HepG2 (cell line): ENCODE measurements at regions of chr4 and their contacts with region 1.

Region 1: DNA sequence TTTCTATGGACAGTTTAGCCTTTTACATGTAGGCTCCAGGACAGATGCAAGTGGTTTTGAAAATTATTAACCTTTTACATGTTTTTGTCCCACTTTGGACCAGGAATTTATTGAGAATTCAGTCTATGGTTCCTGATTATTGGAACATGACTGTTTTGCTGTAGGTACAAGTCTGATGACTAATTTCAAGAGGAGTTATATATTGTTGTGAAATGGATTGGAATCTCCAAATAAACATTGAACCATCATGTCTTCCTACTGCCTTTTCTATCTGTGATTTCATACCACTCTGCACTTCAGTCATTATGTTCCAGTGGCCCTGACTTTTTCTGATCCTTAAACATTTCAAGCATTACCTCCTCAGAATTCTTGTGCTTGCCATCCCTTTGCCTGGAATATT is 35.9 kb downstream of the TBC1D19 start:
- DNase-seq: no peak
- ATAC-seq: no peak
- H3K4me3 ChIP-seq: no peak overlapping the region
- H3K27ac ChIP-seq: no peak overlapping the region
- H3K4me1 ChIP-seq: no peaks in the 10 kb centered on the region
- H3K27me3 ChIP-seq: no peaks in the 10 kb centered on the region
- CTCF ChIP-seq: no peak
- EP300 ChIP-seq: no peak
- POLR2A ChIP-seq: no peak
- RAD21 ChIP-seq: no peak

Region 2: GRCh38 chr4:26330186-26330787 is 289.5 kb before region 1 on chr4:
- CTCF ChIA-PET with region 1: no interaction called
- POLR2A ChIA-PET with region 1: no interaction called
- in situ Hi-C with region 1: no loop called
- intact Hi-C with region 1: no loop called
- DNase-seq: peak; percentile 64
- ATAC-seq: peak; percentile 91
- H3K4me3 ChIP-seq: no peak overlapping the region
- H3K27ac ChIP-seq: no peak overlapping the region
- H3K4me1 ChIP-seq: peaks cover 22% of the 10 kb centered on the region
- H3K27me3 ChIP-seq: no peaks in the 10 kb centered on the region
- CTCF ChIP-seq: peak; percentile 68
- EP300 ChIP-seq: no peak
- POLR2A ChIP-seq: no peak
- RAD21 ChIP-seq: no peak

Region 3: GRCh38 chr4:26529479-26529878 is 90.3 kb before region 1 on chr4:
- CTCF ChIA-PET with region 1: no interaction called
- POLR2A ChIA-PET with region 1: no interaction called
- in situ Hi-C with region 1: no loop called
- intact Hi-C with region 1: no loop called
- DNase-seq: no peak
- ATAC-seq: no peak
- H3K4me3 ChIP-seq: no peak overlapping the region
- H3K27ac ChIP-seq: no peak overlapping the region
- H3K4me1 ChIP-seq: no peaks in the 10 kb centered on the region
- H3K27me3 ChIP-seq: peaks cover 1 to 8% of the 10 kb centered on the region in 2 experiments; a peak in 1 of 5 replicates
- CTCF ChIP-seq: no peak
- EP300 ChIP-seq: no peak
- POLR2A ChIP-seq: no peak
- RAD21 ChIP-seq: no peak

Region 4: DNA sequence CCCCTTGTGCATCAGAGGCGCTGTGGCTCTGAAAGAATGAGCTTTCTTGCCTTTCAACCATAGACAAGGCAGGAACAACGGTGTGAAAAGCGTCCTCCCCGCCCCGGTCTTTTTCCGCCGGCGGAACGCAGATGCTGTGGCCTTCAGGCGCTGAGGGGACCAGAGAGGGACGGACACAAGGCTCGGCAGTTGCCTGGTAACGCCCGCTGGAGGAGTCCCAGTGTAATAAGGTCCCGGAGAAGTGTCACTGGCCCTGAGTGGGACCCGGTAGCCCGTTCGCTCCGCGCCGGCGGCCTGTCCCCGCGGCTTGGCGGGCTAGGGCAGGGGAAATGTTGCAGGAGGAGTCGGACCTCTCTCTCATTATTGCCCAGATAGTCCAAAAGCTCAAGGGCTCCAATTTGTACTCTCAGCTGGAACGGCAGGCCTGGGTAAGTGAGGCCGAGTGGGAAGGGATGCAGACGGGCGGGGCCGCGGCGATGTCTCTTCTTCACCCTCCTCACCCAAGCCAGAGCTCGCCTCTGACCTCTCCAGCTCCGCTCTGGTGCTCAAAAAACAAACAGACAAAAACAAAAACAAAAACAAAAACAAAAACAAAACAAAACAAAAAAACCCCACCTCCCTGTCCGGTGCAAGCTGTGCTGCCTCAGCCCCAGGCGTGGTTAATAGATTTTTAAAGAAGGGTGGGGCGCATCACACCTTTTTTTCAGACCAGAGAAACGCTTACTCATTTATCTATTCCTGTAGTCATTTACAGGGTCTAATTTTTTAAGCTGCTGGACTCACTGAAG is 35.7 kb before region 1 on chr4 and contains the start of gene TBC1D19:
- CTCF ChIA-PET with region 1: no interaction called
- POLR2A ChIA-PET with region 1: no interaction called
- in situ Hi-C with region 1: no loop called
- intact Hi-C with region 1: loop called (anchors 2 kb)
- DNase-seq: peak; percentile 70
- ATAC-seq: peak; percentile 100
- H3K4me3 ChIP-seq: peak within 1 kb of the TSS; percentile 76 to 82 (median 80)
- H3K27ac ChIP-seq: no peak within 1 kb of the TSS
- H3K4me1 ChIP-seq: peaks cover 13% of the 10 kb centered on the region
- H3K27me3 ChIP-seq: no peaks in the 10 kb centered on the region
- CTCF ChIP-seq: peak; percentile 43
- EP300 ChIP-seq: 0 out of 4 replicates have a peak, but pooled peaks of 1 of the 2 experiments have one; percentile 21
- POLR2A ChIP-seq: peak in 1 of 2 experiments; percentile 32; a peak in 1 of 4 replicates
- RAD21 ChIP-seq: peak; percentile 59
- total RNA-seq, gene TBC1D19: 3.5 and 3.6 TPM in 2 replicates